ENCODE measurements at regions of chr3 and their contacts with region 1.

Region 1: GRCh38 chr3:44439499-44440295 is 37.8 kb downstream of the ZNF445 start:
- DNase-seq: peak; percentile 88
- ATAC-seq: peak; percentile 98
- H3K4me3 ChIP-seq: peak overlapping the region; percentile 35; the same call in 1 of the 2 replicates
- H3K27ac ChIP-seq: peak overlapping the region; percentile 92
- H3K4me1 ChIP-seq: peaks cover 25% of the 10 kb centered on the region
- H3K27me3 ChIP-seq: no peaks in the 10 kb centered on the region
- CTCF ChIP-seq: no peak
- EP300 ChIP-seq: peak; percentile 71 to 77; a peak in 3 of 4 replicates
- POLR2A ChIP-seq: peak; percentile 70; the same call in 1 of the 2 replicates
- RAD21 ChIP-seq: no peak

Region 2: DNA sequence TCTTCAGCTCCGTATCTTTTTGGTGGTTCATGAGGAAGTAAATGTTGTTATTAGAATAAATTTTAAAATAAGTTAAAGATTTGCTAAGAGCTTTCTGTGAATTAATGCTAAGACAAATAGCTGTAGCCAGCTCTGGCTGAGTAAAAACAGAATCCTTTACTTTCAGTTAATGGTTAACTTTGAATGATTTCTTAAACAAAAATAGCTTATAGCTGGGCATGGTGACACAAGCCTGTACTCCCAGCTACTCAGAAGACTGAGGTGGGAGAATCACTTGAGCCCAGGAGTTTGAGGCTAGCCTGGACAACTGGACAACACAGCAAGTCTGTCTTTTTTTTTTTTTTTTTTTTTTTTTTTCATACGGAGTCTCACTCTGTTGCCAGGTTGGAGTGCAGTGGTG is 76.1 kb before region 1 on chr3:
- CTCF ChIA-PET with region 1: interaction called, 4 read pairs
- POLR2A ChIA-PET with region 1: interaction called, 10 read pairs
- RAD21 ChIA-PET with region 1: interaction called, 13 read pairs
- SMC1A ChIA-PET with region 1: interaction called, 15 read pairs
- in situ Hi-C with region 1: no loop called
- intact Hi-C with region 1: no loop called
- DNase-seq: no peak
- ATAC-seq: peak; percentile 90
- H3K4me3 ChIP-seq: no peak overlapping the region
- H3K27ac ChIP-seq: no peak overlapping the region
- H3K4me1 ChIP-seq: no peaks in the 10 kb centered on the region
- H3K27me3 ChIP-seq: no peaks in the 10 kb centered on the region
- CTCF ChIP-seq: no peak
- EP300 ChIP-seq: no peak
- POLR2A ChIP-seq: no peak
- RAD21 ChIP-seq: no peak

Region 3: DNA sequence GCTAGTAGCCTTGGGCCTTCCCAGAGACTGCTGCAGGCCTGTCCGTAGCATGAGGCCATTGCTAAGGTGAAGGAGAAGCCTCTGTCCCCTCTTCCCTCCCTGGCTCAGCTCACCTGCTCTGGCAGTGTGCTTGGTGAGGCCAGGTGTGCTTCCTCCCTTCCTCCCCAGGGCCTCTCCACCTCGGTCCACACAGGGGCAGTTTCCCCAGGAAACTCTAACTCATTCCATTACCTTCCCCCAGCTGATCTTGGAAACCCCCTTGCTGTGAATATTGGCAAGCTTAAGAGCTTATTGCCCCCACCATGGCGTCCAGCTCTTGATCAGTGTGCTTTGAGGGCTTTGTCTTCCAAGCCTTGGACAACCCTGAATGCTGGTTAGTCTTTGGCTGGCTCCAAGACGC is 14.9 kb before region 1 on chr3:
- CTCF ChIA-PET with region 1: interaction called, 8 read pairs
- POLR2A ChIA-PET with region 1: interaction called, 6 read pairs
- RAD21 ChIA-PET with region 1: interaction called, 20 read pairs
- SMC1A ChIA-PET with region 1: interaction called, 8 read pairs
- in situ Hi-C with region 1: no loop called
- intact Hi-C with region 1: no loop called
- DNase-seq: no peak
- ATAC-seq: peak; percentile 78
- H3K4me3 ChIP-seq: no peak overlapping the region
- H3K27ac ChIP-seq: no peak overlapping the region
- H3K4me1 ChIP-seq: no peaks in the 10 kb centered on the region
- H3K27me3 ChIP-seq: no peaks in the 10 kb centered on the region
- CTCF ChIP-seq: no peak
- EP300 ChIP-seq: no peak
- POLR2A ChIP-seq: no peak
- RAD21 ChIP-seq: 0 out of 2 replicates have a peak, but pooled peaks have one; percentile 6

Region 4: DNA sequence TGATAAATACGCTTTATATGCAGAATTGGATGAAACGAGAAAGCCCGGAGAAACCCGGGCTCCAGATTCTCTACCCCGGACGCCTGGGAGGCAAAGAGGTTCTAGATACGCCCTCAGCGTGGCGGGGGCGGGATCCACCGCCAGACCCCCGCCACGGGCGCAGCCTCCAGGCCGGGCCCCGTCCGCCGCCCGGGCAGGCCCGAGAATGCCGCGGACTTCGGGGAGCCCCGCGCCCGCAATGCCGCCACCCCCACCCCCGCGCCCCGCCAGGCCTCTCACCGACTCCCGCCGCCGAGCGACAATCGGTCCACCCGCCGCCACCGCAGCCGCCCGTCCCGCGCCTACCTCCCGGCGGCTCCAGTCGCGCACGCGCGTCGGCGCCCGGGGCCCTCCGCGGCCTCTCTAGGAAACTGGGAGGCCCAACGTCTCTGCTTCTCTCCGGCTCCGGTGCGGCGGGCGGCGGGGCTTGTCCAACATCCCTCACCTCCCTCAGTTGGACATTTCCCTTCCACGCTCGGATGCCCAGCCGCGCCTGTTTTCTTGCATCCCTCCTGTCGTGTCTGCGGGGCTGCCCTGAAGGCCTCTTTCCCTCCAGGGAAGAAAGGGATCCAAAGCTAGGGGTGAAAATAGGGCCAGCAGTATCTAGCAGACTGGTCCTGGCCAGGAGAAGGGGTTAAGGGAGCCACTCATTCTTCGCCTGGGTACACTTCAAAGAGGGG is 37.8 kb after region 1 on chr3 and contains the start of gene ZNF445:
- CTCF ChIA-PET with region 1: no interaction called
- POLR2A ChIA-PET with region 1: interaction called, 3 read pairs
- RAD21 ChIA-PET with region 1: interaction called, 5 read pairs
- SMC1A ChIA-PET with region 1: interaction called, 5 read pairs
- in situ Hi-C with region 1: no loop called
- intact Hi-C with region 1: loop called (anchors 2 kb)
- DNase-seq: no peak
- ATAC-seq: peak; percentile 92
- H3K4me3 ChIP-seq: peak within 1 kb of the TSS; percentile 82
- H3K27ac ChIP-seq: peak within 1 kb of the TSS; percentile 27
- H3K4me1 ChIP-seq: peaks cover 4% of the 10 kb centered on the region; the same call in 1 of the 2 replicates
- H3K27me3 ChIP-seq: no peaks in the 10 kb centered on the region
- CTCF ChIP-seq: no peak
- EP300 ChIP-seq: no peak
- POLR2A ChIP-seq: peak; percentile 85
- RAD21 ChIP-seq: no peak
- polyA plus RNA-seq, gene ZNF445: 0.80 to 0.85 TPM

Region 5: GRCh38 chr3:44510000-44510368 is 70.3 kb after region 1 on chr3:
- CTCF ChIA-PET with region 1: interaction called, 7 read pairs
- POLR2A ChIA-PET with region 1: no interaction called
- RAD21 ChIA-PET with region 1: interaction called, 21 read pairs
- SMC1A ChIA-PET with region 1: interaction called, 10 read pairs
- in situ Hi-C with region 1: no loop called
- intact Hi-C with region 1: no loop called
- DNase-seq: no peak
- ATAC-seq: peak; percentile 61
- H3K4me3 ChIP-seq: peak overlapping the region; percentile 81
- H3K27ac ChIP-seq: peak overlapping the region; percentile 81
- H3K4me1 ChIP-seq: peaks cover 8% of the 10 kb centered on the region
- H3K27me3 ChIP-seq: no peaks in the 10 kb centered on the region
- CTCF ChIP-seq: no peak
- EP300 ChIP-seq: no peak
- POLR2A ChIP-seq: no peak
- RAD21 ChIP-seq: no peak

Measured in GM12878 (cell line).